ENCODE measurements at regions of chr12 and their contacts with region 1.

Region 1: GRCh38 chr12:11055306-11055705 is 6.8 kb downstream of the TAS2R46 start:
- DNase-seq: no peak
- H3K4me3 ChIP-seq: no peak overlapping the region
- H3K4me3 Mint-ChIP-seq: no peak overlapping the region
- H3K27ac ChIP-seq: no peak overlapping the region
- H3K27ac Mint-ChIP-seq: no peak overlapping the region
- H3K4me1 ChIP-seq: no peaks in the 10 kb centered on the region
- H3K4me1 Mint-ChIP-seq: peaks cover 0 to 4% (median 2%) of the 10 kb centered on the region in 4 donors
- H3K27me3 ChIP-seq: no peaks in the 10 kb centered on the region
- H3K27me3 Mint-ChIP-seq: no peaks in the 10 kb centered on the region

Region 2: DNA sequence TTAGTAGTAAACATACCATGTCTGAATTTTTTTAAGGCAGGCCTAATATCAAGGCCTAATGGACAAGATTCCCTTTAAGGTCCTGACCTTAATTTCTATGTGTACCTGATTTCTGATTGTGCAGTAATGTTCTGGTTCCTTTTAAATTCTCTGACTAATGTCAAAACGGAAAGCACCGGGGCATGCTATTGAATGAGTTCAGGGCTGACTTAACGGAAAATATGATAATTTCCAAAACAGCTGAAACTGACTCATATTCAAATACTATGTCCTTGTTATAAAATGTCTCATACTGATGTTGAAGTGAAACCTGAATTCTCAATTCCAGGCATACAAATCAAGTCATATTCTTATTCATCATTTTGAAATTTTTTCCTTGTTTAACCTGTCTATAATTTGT is 30.1 kb after region 1 on chr12:
- CTCF ChIA-PET with region 1: no interaction called
- POLR2A ChIA-PET with region 1: no interaction called
- intact Hi-C with region 1: loop called (anchors 1 kb)
- DNase-seq: no peak
- H3K4me3 ChIP-seq: no peak overlapping the region
- H3K4me3 Mint-ChIP-seq: no peak overlapping the region
- H3K27ac ChIP-seq: no peak overlapping the region
- H3K27ac Mint-ChIP-seq: no peak overlapping the region
- H3K4me1 ChIP-seq: no peaks in the 10 kb centered on the region
- H3K4me1 Mint-ChIP-seq: peaks cover 0 to 1% (median 0%) of the 10 kb centered on the region in 4 donors
- H3K27me3 ChIP-seq: no peaks in the 10 kb centered on the region
- H3K27me3 Mint-ChIP-seq: no peaks in the 10 kb centered on the region

Measured in CD4-positive, alpha-beta memory T cell (primary cell).